HEK293T (cell line): ENCODE measurements at regions of chr20 and their contacts with region 1.

Region 1: DNA sequence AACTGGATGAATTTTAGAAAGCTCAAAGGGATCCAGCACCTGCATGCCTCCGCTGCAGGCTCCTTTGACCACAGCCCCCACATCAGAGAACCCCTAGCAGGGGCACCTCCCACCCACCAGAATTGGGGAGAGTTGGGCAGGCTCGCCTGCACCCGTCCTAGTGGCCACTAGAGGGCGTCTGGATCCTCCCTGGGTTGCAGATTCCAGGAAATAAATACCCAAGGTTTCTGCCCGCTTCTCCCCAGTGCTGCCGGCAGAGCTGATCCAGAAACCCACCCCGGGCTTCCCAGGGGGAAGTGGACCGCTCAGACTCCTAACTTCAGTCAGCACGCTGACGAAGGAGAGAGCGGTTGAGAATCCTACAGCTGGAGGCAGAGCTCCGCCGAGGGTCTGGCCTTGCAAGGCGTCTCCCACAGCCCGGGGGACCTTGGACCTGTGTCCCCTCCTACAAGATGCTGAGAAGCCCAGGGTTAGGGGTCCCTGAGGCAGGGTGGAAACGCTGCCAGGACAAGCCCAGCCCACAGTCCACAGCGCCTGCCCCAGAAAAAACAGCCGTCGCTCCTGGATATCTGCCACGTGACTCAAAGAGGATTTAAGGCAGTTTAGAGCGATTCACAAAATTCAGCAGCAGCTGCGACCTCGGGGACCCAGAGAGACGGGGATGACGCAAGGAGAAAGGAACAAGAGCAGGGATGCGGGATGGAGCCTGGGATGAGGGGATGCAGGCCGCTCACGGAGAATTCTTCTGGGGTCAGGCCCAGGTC is 32.6 kb upstream of the PHACTR3 start:
- DNase-seq: peak; percentile 82

Region 2: DNA sequence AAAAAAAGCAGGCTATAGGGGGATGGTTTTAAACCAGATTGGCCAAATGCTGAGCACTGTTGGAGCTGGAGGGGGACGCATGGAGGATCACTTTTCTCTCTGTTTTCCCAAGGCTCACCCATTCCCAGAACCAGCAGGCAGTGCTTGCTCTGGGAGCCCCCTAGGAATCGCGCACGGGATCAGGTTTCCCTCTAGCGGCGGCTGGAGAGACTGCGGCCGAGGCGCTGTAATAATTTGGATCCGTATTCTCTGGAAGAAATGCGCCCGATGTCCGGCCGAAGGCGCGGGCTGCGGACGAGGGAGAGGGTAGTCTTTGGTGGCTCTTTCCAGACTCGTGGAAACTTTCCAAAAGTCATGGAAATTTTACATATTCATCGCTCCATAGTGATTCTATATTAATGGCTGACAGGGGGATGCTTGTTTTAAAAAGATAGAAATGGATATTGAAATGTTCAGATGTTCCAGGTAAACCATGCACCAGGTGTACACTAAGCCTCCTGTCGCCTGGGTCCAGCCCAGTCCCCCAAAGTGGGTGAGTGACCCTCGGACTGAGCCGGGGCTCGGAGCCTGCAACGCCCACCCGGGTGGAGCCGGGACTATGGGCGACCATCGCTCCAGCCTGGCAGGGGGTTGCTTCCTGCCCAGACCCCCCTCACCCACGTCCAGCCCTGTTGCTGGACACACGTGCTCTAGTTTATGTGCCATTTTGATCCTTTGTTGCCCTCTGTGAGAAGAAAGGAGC is 46.1 kb before region 1 on chr20:
- CTCF ChIA-PET with region 1: no interaction called
- POLR2A ChIA-PET with region 1: no interaction called
- DNase-seq: peak; percentile 78

Region 3: DNA sequence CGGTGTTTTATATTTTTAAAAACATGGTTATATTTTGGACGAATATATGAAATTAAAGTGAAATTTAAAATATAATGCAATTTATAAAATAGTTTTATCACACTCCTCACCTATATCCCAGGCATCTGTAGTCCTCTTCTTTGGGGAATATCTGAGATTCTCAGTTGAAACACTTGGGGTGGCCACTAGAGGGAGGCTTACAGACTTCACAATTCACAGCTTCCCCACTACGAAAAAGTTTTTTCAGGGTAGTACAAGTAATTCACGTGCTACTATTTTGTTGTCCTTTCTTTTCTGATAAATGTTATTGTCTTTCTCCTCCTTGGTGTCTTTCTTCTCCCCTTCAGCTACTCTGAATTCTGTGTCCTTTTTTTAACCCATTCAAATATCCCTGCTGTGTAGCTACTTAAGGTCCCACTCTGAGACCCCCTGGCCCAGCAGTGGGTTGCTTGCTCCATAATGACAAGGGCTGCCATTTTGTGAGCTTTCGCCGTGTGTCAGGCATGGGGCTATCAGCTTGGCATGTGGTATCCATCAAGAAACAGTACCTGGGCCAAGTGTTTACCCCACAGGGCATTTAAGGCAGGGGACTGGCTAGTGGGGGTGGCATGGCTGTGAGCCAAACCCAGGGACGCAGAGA is 11.0 kb before region 1 on chr20:
- CTCF ChIA-PET with region 1: interaction called, 16 read pairs
- POLR2A ChIA-PET with region 1: no interaction called
- DNase-seq: peak; percentile 65